PC-3 (cell line): ENCODE measurements at regions of chr5 and their contacts with region 1.

Region 1: GRCh38 chr5:172733131-172733973 is 37.6 kb downstream of the DUSP1 start:
- DNase-seq: no peak
- ATAC-seq: no peak
- H3K4me3 ChIP-seq: no peak overlapping the region
- H3K27ac ChIP-seq: no peak overlapping the region
- H3K4me1 ChIP-seq: peaks cover 9% of the 10 kb centered on the region
- H3K27me3 ChIP-seq: no peaks in the 10 kb centered on the region
- CTCF ChIP-seq: no peak

Region 2: DNA sequence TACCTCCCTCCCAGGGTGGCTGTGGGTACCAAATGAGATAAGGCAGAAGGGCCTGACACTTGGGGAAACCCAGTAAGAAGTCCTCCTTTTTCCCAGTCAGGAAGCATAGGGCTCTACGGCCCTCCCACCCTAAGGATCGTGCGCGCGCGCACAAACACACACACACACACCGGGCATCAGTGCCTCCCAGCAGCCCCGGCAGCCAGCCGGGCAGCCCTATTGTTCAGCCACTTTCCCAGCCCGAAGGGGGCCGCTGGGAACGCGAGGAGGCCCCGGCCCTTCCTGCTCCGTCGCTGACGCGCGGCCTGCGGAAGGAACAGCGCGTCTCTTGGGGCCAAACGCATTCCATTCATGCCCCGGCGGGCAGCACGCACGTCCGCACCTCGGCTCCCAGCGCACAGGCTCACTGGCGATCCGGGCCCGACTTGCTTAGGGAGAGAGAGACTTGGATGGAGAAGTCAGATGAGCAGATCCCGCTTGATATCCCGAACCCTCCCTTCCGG is 15.0 kb after region 1 on chr5:
- CTCF ChIA-PET with region 1: no interaction called
- POLR2A ChIA-PET with region 1: no interaction called
- intact Hi-C with region 1: no loop called
- DNase-seq: no peak
- ATAC-seq: no peak
- H3K4me3 ChIP-seq: no peak overlapping the region
- H3K27ac ChIP-seq: no peak overlapping the region
- H3K4me1 ChIP-seq: no peaks in the 10 kb centered on the region
- H3K27me3 ChIP-seq: no peaks in the 10 kb centered on the region
- CTCF ChIP-seq: no peak

Region 3: DNA sequence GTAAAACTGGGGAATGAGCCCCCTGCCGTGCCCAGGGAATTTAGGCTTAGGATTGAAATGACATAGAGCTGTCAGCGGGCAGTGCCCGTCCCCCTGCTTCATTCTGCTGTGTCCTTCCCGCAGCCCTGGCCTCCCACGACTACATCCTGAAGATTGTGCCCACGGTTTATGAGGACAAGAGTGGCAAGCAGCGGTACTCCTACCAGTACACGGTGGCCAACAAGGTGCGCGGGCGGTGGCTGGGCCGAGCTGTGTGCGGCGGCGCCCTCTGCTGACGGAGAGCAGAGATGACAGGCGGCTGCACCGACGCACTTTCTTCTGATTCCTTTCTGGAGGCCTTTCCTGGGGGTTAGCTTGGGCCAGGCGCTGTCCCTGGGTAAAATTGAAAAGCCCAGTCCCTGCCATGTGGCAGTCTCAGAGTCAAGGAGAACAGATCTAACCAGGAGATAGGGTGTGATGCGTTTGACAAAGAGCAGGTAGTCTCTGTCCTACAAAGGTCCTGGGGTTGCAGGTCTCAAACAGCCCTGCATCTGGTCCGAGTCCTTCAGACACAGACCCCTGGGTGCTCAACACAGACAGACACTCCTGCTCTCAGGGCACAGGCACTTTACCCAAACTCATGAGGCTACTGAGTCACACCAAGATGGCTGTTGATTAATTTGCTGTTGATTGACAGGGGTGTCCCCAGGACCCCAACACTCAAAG is 199.1 kb after region 1 on chr5:
- CTCF ChIA-PET with region 1: no interaction called
- POLR2A ChIA-PET with region 1: interaction called, 16 read pairs
- intact Hi-C with region 1: no loop called
- DNase-seq: peak; percentile 70
- ATAC-seq: peak; percentile 66
- H3K4me3 ChIP-seq: no peak overlapping the region
- H3K27ac ChIP-seq: peak overlapping the region; percentile 88
- H3K4me1 ChIP-seq: peaks cover 21% of the 10 kb centered on the region
- H3K27me3 ChIP-seq: no peaks in the 10 kb centered on the region
- CTCF ChIP-seq: peak; percentile 95